Heart right ventricle (tissue), 16 donors: ENCODE measurements at regions of chr3 and their contacts with region 1.

Region 1: GRCh38 chr3:195259475-195260279 is 11.3 kb downstream of the XXYLT1 start:
- DNase-seq: peak; percentile 88 to 93
- ATAC-seq: peak; percentile 78 to 92 (median 86)
- H3K4me3 ChIP-seq: peak overlapping the region; percentile 47 to 84 (median 70)
- H3K27ac ChIP-seq: peak overlapping the region; percentile 74 to 98 (median 92)
- H3K4me1 ChIP-seq: peaks cover 15 to 44% (median 30%) of the 10 kb centered on the region in 9 donors
- H3K27me3 ChIP-seq: no peaks in the 10 kb centered on the region
- CTCF ChIP-seq: peak in 8 of 9 donors; percentile 37 to 99 (median 78)

Region 2: DNA sequence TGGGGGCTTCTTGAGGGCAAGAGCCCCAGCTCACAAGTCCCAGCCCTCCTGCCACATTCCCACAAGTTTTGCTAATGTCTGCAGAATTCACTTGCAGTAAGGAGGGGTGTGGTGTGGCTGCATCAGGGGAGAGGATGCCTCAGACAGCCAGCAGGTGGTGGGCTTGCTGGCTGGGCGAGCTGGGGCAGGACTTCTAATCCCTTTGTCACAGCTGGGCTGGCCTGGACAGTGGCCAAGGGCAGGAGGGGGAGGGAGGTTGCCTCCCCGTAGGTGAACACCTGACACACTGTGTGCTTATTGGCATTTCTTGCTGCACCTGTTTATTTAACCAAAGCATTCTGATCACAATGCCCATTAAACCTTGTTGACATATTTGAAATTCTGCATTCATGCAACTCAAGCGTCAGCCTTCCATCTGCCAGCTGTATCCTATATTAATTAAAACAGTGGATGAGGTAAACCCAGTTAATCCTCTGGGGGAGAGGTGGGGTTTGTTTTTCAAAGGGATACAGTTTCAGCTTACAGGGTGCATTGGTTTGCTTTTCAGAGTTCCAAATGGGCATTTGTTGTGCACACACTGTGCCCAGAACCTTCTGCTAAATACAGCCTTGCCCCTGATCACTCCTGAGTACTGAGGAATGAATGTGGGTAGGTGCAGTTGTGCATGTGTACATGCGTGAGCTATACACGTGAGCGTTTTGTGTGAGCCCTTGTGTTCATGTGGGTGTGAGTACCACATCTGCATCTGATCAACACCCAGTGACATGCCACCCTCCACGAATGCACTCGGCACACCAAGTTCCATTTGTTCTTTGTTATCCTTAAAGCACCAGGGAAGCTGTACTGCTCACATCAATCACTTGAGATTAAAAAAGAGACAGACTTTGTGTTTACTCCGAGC is 257.5 kb before region 1 on chr3:
- intact Hi-C with region 1: loop called in 9 of 10 experiments (anchors 2 to 10 kb)
- DNase-seq: peak; percentile 57 to 72
- ATAC-seq: peak; percentile 64 to 84 (median 80)
- H3K4me3 ChIP-seq: no peak overlapping the region
- H3K27ac ChIP-seq: peak overlapping the region in 6 of 10 donors; percentile 2 to 71 (median 51)
- H3K4me1 ChIP-seq: peaks cover 2 to 26% (median 10%) of the 10 kb centered on the region in 9 donors
- H3K27me3 ChIP-seq: no peaks in the 10 kb centered on the region
- CTCF ChIP-seq: peak; percentile 54 to 74 (median 66)

Region 3: DNA sequence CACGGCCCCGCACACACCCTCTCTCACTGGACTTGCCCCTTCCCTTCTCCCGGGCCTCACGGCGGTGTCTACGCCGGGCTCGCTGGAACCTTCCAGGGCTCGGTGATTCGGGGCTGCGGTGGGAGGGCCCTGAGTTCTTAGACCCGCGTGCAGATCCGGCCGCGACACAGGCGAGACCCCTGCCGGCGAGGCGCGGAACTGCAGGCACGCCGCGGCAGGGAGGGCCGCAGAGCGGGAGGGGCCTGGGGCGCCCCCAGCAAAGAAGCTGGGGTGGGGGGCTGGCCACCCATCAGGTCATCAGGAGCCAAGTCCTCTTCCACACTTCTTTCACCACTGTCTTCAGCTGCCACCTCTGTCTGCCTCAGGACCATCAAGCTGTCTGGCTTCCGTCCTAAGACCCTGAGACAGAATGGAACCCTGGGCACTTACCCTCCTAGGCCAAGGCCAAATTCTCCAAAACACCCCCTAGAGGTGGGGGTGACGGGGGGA is 153.2 kb before region 1 on chr3:
- intact Hi-C with region 1: loop called in 4 of 10 experiments (anchors 5 kb)
- DNase-seq: peak; percentile 66 to 80
- ATAC-seq: peak; percentile 65 to 86 (median 80)
- H3K4me3 ChIP-seq: peak overlapping the region in 7 of 10 donors; percentile 2 to 44 (median 32)
- H3K27ac ChIP-seq: peak overlapping the region in 2 of 10 donors; percentile 10 to 44
- H3K4me1 ChIP-seq: peaks cover 7 to 41% (median 19%) of the 10 kb centered on the region in 9 donors
- H3K27me3 ChIP-seq: no peaks in the 10 kb centered on the region
- CTCF ChIP-seq: peak; percentile 99 to 100 (median 100)

Region 4: GRCh38 chr3:195129644-195130492 is 129.8 kb before region 1 on chr3:
- intact Hi-C with region 1: loop called in 3 of 10 experiments (anchors 5 to 10 kb)
- DNase-seq: no peak
- ATAC-seq: no peak
- H3K4me3 ChIP-seq: no peak overlapping the region
- H3K27ac ChIP-seq: no peak overlapping the region
- H3K4me1 ChIP-seq: peaks cover 2 to 18% (median 10%) of the 10 kb centered on the region in 9 donors
- H3K27me3 ChIP-seq: no peaks in the 10 kb centered on the region
- CTCF ChIP-seq: no peak

Region 5: DNA sequence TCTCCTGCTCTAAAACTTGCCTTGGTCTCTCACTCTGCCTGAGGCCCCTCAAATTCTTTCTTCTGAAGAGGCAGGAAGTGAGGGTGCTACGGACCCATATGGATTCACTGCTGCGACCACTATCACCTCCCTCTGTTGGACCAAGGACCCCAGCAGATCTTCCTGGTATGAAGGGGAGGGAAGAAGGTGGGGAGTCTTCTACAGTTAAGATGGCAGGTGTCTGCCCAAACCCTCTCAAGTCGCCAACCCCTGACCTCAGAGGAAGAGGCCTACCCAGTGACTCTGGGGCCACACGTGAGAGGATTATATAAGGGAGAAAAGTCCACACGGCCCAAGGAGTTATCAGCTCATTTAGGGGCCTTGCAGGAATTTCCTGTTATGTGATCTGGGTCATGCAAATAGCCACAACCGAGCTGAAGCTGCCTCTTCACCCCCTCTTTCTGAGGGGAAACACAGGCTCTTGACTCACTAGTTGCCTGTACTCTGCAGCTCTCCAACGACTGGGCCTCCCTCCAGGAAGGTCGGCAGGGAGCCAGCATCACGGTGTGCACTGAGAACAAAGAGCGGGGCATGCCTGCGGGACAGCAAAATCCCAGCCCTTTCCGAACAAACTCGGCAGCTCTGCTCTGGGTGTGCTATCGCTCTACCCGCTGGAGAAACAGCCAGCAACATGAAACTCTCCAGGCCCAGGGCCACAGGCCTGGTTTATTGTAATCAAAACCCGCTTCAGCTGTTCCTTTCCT is 104.7 kb before region 1 on chr3:
- intact Hi-C with region 1: loop called in 2 of 10 experiments (anchors 5 to 10 kb)
- DNase-seq: peak; percentile 91 to 94
- ATAC-seq: peak; percentile 46 to 85 (median 79)
- H3K4me3 ChIP-seq: no peak overlapping the region
- H3K27ac ChIP-seq: peak overlapping the region; percentile 52 to 92 (median 84)
- H3K4me1 ChIP-seq: peaks cover 36 to 93% (median 73%) of the 10 kb centered on the region in 9 donors
- H3K27me3 ChIP-seq: no peaks in the 10 kb centered on the region
- CTCF ChIP-seq: no peak

Region 6: GRCh38 chr3:195372220-195372619 is 112.5 kb after region 1 on chr3:
- intact Hi-C with region 1: no loop called
- DNase-seq: no peak
- ATAC-seq: no peak
- H3K4me3 ChIP-seq: no peak overlapping the region
- H3K27ac ChIP-seq: no peak overlapping the region
- H3K4me1 ChIP-seq: no peaks in the 10 kb centered on the region
- H3K27me3 ChIP-seq: no peaks in the 10 kb centered on the region
- CTCF ChIP-seq: no peak

Region 7: GRCh38 chr3:195886181-195887141 is 626.8 kb after region 1 on chr3:
- intact Hi-C with region 1: no loop called
- DNase-seq: peak; percentile 50 to 54
- ATAC-seq: peak; percentile 54 to 85 (median 71)
- H3K4me3 ChIP-seq: peak overlapping the region in 1 of 10 donors; percentile 18
- H3K27ac ChIP-seq: peak overlapping the region; percentile 17 to 90 (median 80)
- H3K4me1 ChIP-seq: peaks cover 17 to 67% (median 50%) of the 10 kb centered on the region in 9 donors
- H3K27me3 ChIP-seq: no peaks in the 10 kb centered on the region
- CTCF ChIP-seq: no peak